ENCODE measurements at regions of chr7 and their contacts with region 1.

Region 1: GRCh38 chr7:76201730-76202665 is at the start of gene SRRM3:
- DNase-seq: peak; percentile 63
- ATAC-seq: peak; percentile 90
- H3K4me3 ChIP-seq: peak within 1 kb of the TSS; percentile 21 to 55 (median 41); a peak in 4 of 6 replicates
- H3K27ac ChIP-seq: no peak within 1 kb of the TSS
- H3K4me1 ChIP-seq: peaks cover 12% of the 10 kb centered on the region
- H3K27me3 ChIP-seq: no peaks in the 10 kb centered on the region; a peak in 1 of 5 replicates
- CTCF ChIP-seq: peak; percentile 81
- EP300 ChIP-seq: peak in 1 of 2 experiments; percentile 33; a peak in 1 of 4 replicates
- POLR2A ChIP-seq: no peak
- RAD21 ChIP-seq: peak; percentile 88
- total RNA-seq, gene SRRM3: 0.11 and 0.13 TPM in 2 replicates

Region 2: DNA sequence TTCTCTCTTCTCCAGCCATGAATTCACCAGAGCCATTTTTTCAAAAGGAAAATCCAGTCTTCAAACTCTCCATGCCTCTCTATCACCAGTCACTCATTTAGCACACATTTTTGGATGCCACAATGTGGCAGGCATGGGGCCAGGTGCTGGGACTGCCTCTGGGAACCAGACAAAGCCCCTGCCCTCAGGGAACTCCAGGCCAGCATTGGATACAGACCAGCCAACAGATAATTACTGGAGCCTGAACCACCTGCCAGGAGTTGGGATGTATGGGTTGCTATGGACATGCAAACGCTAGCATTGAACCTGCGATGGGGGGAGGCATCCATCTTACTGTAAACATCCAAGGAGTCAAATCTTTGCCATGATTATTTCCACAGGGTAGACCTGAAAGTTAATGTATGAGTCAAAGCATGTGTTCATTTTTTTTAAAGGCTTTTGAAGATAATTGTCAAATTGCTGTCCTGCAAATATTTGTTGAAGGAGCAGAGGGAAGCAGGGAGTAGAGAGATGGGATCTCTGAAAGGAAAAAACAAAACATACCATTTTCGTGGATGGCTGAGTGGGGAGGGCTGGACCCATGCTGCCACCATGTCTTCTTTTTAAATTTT is 42.9 kb after region 1 on chr7:
- CTCF ChIA-PET with region 1: no interaction called
- POLR2A ChIA-PET with region 1: interaction called, 3 read pairs
- in situ Hi-C with region 1: no loop called
- intact Hi-C with region 1: loop called (anchors 1 kb)
- DNase-seq: peak; percentile 54
- ATAC-seq: no peak
- H3K4me3 ChIP-seq: no peak overlapping the region
- H3K27ac ChIP-seq: no peak overlapping the region
- H3K4me1 ChIP-seq: peaks cover 57% of the 10 kb centered on the region
- H3K27me3 ChIP-seq: no peaks in the 10 kb centered on the region
- CTCF ChIP-seq: no peak
- EP300 ChIP-seq: no peak; a peak in 1 of 4 replicates
- POLR2A ChIP-seq: no peak
- RAD21 ChIP-seq: no peak

Measured in HepG2 (cell line).